Activated CD4-positive, alpha-beta T cell treated with anti-CD3 and anti-CD28 coated beads for 36 hours (primary cell): ENCODE measurements at regions of chr15 and their contacts with region 1.

Region 1: GRCh38 chr15:83011271-83012075 is at the start of gene C15orf40:
- DNase-seq: peak; percentile 88
- ATAC-seq: peak; percentile 81
- H3K4me3 Mint-ChIP-seq: peak within 1 kb of the TSS; percentile 89
- H3K27ac Mint-ChIP-seq: peak within 1 kb of the TSS; percentile 96
- H3K4me1 Mint-ChIP-seq: peaks cover 48% of the 10 kb centered on the region
- H3K27me3 Mint-ChIP-seq: no peaks in the 10 kb centered on the region
- total RNA-seq, gene C15orf40: 20.2 to 23.1 TPM

Region 2: GRCh38 chr15:82540055-82540983 is 471.2 kb before region 1 on chr15 and contains the start of gene RPS17:
- CTCF ChIA-PET with region 1: interaction called, 5 read pairs
- POLR2A ChIA-PET with region 1: interaction called, 4 read pairs
- intact Hi-C with region 1: loop called (anchors 2 to 5 kb)
- DNase-seq: peak; percentile 99
- ATAC-seq: peak; percentile 93
- H3K4me3 Mint-ChIP-seq: peak within 1 kb of the TSS; percentile 96
- H3K27ac Mint-ChIP-seq: peak within 1 kb of the TSS; percentile 96
- H3K4me1 Mint-ChIP-seq: peaks cover 23% of the 10 kb centered on the region
- H3K27me3 Mint-ChIP-seq: no peaks in the 10 kb centered on the region
- total RNA-seq, gene RPS17: 2,882 to 3,294 TPM

Region 3: GRCh38 chr15:82709421-82710207 is 301.9 kb before region 1 on chr15 and contains the start of gene AP3B2:
- CTCF ChIA-PET with region 1: interaction called, 5 read pairs
- POLR2A ChIA-PET with region 1: no interaction called
- intact Hi-C with region 1: loop called in 1 of 2 experiments (anchors 1 kb)
- DNase-seq: peak; percentile 85
- ATAC-seq: peak; percentile 97
- H3K4me3 Mint-ChIP-seq: peak within 1 kb of the TSS; percentile 52
- H3K27ac Mint-ChIP-seq: no peak within 1 kb of the TSS
- H3K4me1 Mint-ChIP-seq: no peaks in the 10 kb centered on the region
- H3K27me3 Mint-ChIP-seq: peaks cover 15% of the 10 kb centered on the region
- total RNA-seq, gene AP3B2: 0.39 to 0.59 TPM

Region 4: GRCh38 chr15:82944821-82945220 is 66.7 kb before region 1 on chr15:
- CTCF ChIA-PET with region 1: no interaction called
- POLR2A ChIA-PET with region 1: no interaction called
- intact Hi-C with region 1: no loop called
- DNase-seq: no peak
- ATAC-seq: no peak
- H3K4me3 Mint-ChIP-seq: no peak overlapping the region
- H3K27ac Mint-ChIP-seq: no peak overlapping the region
- H3K4me1 Mint-ChIP-seq: no peaks in the 10 kb centered on the region
- H3K27me3 Mint-ChIP-seq: peaks cover 16% of the 10 kb centered on the region

Region 5: DNA sequence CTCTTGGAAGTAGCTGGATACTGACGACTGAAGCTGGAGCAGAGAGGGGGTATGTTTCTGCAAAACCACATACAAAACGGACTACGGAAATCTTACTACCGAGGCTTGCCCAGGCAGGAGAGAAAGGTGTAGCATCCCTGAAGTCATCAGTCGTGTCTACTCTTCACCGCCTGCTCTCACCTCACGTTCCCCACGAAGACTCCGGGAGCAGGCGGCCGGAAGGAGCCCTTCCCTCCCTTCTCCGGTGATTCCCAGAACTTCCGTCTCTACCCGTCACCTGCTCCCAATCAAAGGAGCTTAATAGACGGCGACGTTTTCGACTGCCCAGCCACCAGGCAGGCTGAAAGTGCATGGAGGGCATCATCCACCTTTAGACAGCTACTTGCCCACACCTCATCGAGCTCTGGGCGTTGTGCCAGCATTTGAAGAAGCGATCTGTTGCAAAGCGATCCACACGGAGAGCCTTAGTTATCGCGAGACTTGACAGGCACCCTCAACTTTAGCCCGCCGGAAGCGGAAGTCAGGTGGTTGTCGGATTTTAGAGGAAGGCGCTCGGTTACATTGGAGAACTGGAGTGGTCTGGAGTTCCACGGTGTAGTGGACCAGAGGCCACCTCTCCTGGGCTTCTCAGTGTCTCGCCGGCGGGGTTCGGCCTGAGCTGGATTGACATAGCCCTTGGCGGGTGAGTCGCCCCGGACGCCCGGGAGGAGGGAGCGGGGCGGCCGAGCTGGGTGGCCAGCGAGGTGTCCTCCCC is 25.6 kb before region 1 on chr15 and contains the start of gene RAMAC:
- CTCF ChIA-PET with region 1: interaction called, 18 read pairs
- POLR2A ChIA-PET with region 1: no interaction called
- intact Hi-C with region 1: loop called in 1 of 2 experiments (anchors 1 kb)
- DNase-seq: peak; percentile 96
- ATAC-seq: peak; percentile 94
- H3K4me3 Mint-ChIP-seq: peak within 1 kb of the TSS; percentile 98
- H3K27ac Mint-ChIP-seq: peak within 1 kb of the TSS; percentile 98
- H3K4me1 Mint-ChIP-seq: peaks cover 21% of the 10 kb centered on the region
- H3K27me3 Mint-ChIP-seq: no peaks in the 10 kb centered on the region
- total RNA-seq, gene RAMAC: 17.3 to 19.5 TPM

Region 6: GRCh38 chr15:83108266-83109226 is 97.1 kb after region 1 on chr15:
- CTCF ChIA-PET with region 1: no interaction called
- POLR2A ChIA-PET with region 1: no interaction called
- intact Hi-C with region 1: loop called in 1 of 2 experiments (anchors 2 kb)
- DNase-seq: peak; percentile 39
- ATAC-seq: peak; percentile 64
- H3K4me3 Mint-ChIP-seq: peak overlapping the region; percentile 69
- H3K27ac Mint-ChIP-seq: peak overlapping the region; percentile 59
- H3K4me1 Mint-ChIP-seq: peaks cover 8% of the 10 kb centered on the region
- H3K27me3 Mint-ChIP-seq: peaks cover 48% of the 10 kb centered on the region

Region 7: GRCh38 chr15:83380682-83381081 is 369.2 kb after region 1 on chr15:
- CTCF ChIA-PET with region 1: no interaction called
- POLR2A ChIA-PET with region 1: no interaction called
- intact Hi-C with region 1: loop called in 1 of 2 experiments (anchors 1 kb)
- DNase-seq: peak; percentile 69
- ATAC-seq: peak; percentile 81
- H3K4me3 Mint-ChIP-seq: no peak overlapping the region
- H3K27ac Mint-ChIP-seq: no peak overlapping the region
- H3K4me1 Mint-ChIP-seq: peaks cover 2% of the 10 kb centered on the region
- H3K27me3 Mint-ChIP-seq: peaks cover 47% of the 10 kb centered on the region

Region 8: GRCh38 chr15:83559310-83559966 is 548.0 kb after region 1 on chr15:
- CTCF ChIA-PET with region 1: no interaction called
- POLR2A ChIA-PET with region 1: no interaction called
- intact Hi-C with region 1: loop called in 1 of 2 experiments (anchors 2 kb)
- DNase-seq: peak; percentile 65
- ATAC-seq: peak; percentile 60
- H3K4me3 Mint-ChIP-seq: no peak overlapping the region
- H3K27ac Mint-ChIP-seq: no peak overlapping the region
- H3K4me1 Mint-ChIP-seq: no peaks in the 10 kb centered on the region
- H3K27me3 Mint-ChIP-seq: peaks cover 12% of the 10 kb centered on the region